ENCODE measurements at regions of chr12 and their contacts with region 1.

Region 1: DNA sequence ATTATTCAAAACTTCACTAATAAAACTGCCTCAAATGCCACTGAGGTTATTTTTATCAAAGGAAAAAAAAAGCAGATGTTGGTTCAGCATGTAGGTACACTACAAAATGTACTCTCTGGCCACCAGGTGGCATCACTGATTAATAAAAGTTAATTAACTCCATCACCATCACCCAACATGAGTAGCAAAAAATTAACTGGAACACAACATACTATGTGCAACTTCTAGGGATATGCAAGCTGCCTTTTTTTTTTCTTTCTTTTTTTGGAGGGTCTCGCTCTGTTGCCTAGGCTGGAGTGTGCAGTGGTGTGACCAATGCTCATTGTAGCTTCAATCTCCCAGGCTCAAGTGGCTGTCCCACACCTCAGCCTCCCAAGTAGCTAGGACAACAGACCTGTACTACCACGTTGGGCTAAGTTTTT is 43.8 kb upstream of the NR2C1 start:
- DNase-seq: peak; percentile 69 to 77
- H3K4me3 ChIP-seq: no peak overlapping the region
- H3K27ac ChIP-seq: peak overlapping the region in 2 of 3 donors; percentile 71 to 86
- H3K4me1 ChIP-seq: peaks cover 18 to 28% of the 10 kb centered on the region in 2 donors
- H3K27me3 ChIP-seq: no peaks in the 10 kb centered on the region
- CTCF ChIP-seq: peak; percentile 15 to 93 (median 70)
- POLR2A ChIP-seq: no peak

Region 2: DNA sequence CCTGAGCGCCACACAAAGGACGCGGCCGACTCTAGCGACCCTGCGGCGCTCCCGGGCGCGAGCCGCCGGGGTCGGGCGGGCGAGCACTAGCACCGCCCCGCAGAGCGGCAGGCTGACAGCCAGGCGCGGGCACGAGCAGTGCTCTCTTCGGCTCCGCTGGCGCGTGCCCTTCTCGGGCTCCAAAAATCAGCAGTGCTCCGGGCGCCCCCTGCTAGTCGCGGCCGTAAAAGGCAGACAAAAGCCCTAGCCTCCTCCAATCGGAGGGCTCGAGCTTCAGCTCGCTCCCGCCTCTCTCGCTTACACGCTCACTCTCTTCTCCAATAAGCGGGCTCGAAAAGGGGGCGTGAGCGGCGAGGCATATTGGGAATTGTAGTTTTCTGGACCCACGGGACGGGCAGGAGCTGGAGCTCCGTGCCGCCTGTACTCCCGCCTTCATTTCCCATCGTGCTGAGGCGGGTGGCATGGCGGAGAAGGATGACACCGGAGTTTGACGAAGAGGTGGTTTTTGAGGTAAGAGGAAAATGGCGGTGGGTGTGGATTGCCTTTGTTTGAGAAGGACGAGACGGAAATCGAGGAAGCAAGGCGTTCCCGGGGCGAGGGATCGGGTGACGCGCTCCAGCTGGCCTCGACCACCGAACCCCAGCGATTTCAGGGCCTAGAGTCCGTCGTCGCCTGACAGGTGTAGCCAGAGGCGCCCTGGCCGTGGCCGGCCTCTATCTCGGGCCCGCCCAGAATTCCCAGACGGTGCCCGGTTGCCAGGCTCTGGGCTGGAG is 100.4 kb after region 1 on chr12 and contains the starts of genes FGD6 and VEZT:
- intact Hi-C with region 1: loop called (anchors 5 kb)
- DNase-seq: peak; percentile 99 to 100
- H3K4me3 ChIP-seq: peak within 1 kb of the TSS; percentile 72 to 88 (median 78)
- H3K27ac ChIP-seq: peak within 1 kb of the TSS; percentile 99 to 100 (median 99)
- H3K4me1 ChIP-seq: peaks cover 37 to 41% of the 10 kb centered on the region in 2 donors
- H3K27me3 ChIP-seq: no peaks in the 10 kb centered on the region
- CTCF ChIP-seq: peak in 5 of 6 experiments; percentile 24 to 82 (median 58)
- POLR2A ChIP-seq: peak; percentile 71 to 96
- total RNA-seq, gene FGD6: 27.1 to 33.7 (median 30.8) TPM
- total RNA-seq, gene VEZT: 101 to 186 (median 160) TPM

Region 3: DNA sequence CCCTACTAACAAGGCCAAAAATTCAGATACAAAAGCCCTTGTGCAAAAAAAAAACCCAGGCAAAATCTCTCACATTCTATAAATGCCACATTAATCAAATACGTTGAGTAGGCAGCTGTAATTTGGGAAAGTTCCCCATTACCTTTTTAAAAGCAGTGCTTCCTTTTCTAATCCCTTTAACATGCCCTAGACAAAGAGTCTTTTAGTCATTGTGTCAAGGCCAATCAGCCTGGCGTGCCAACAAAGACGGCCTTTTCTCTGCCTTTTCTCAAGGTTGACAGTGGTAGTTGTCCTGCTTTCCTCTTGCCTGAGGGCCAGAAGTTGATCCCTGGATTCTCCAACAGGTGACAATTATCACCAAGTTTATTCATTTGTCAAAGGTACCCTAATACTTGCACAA is 294.3 kb after region 1 on chr12:
- intact Hi-C with region 1: no loop called
- DNase-seq: no peak
- H3K4me3 ChIP-seq: no peak overlapping the region
- H3K27ac ChIP-seq: no peak overlapping the region
- H3K4me1 ChIP-seq: peaks cover 0 to 5% of the 10 kb centered on the region in 2 donors
- H3K27me3 ChIP-seq: no peaks in the 10 kb centered on the region
- CTCF ChIP-seq: no peak
- POLR2A ChIP-seq: no peak

Region 4: GRCh38 chr12:95532851-95533250 is 415.7 kb after region 1 on chr12:
- intact Hi-C with region 1: loop called (anchors 10 kb)
- DNase-seq: no peak
- H3K4me3 ChIP-seq: no peak overlapping the region
- H3K27ac ChIP-seq: no peak overlapping the region
- H3K4me1 ChIP-seq: peaks cover 5 to 9% of the 10 kb centered on the region in 2 donors
- H3K27me3 ChIP-seq: no peaks in the 10 kb centered on the region
- CTCF ChIP-seq: no peak
- POLR2A ChIP-seq: no peak